ENCODE measurements at regions of chr2 and their contacts with region 1.

Region 1: DNA sequence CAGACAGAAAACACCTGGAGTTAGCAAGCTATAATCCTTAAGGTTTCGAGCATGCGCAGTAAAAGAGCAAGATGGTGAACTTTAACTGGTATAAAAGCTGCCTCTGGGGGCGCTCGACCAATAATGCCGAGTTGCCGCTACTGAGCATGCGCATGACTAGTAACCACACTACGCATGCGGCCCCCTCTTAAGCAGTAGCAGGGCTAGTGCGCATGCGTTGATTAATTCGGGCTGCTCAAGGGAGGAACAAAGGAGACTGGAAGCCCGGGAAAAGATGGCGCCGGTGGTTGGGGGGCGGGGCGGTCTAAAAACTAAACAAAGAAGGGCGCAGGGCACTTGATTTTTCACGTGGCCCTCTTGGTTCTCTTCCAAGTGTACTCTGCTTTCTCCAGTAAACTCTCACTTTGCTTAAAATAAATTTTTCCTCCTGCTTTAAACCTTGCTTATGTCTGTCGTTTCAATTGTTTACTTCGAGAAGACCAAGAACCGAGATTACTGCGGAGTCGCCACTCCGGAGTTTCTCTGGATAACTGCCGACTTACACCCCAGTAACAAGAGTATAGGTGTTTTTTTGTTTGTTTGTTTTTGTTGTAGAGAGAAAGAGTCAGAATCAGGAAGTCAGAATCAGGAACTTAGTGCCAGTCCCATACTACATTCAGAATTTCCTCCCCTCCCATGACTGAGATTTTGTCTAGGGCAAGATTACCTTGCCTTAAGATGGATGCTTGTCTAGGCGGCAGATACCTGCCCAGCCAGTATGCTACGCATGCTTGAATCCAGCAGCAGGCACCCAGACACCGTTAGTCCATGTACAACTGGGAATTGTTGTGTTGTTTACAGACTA is 5.8 kb downstream of the XRCC5 start:
- DNase-seq: peak; percentile 94 to 99 (median 97)
- ATAC-seq: peak; percentile 93
- H3K4me3 ChIP-seq: peak overlapping the region; percentile 65
- H3K4me3 Mint-ChIP-seq: peak overlapping the region; percentile 90
- H3K27ac ChIP-seq: peak overlapping the region; percentile 69 to 78
- H3K27ac Mint-ChIP-seq: peak overlapping the region; percentile 90
- H3K4me1 ChIP-seq: peaks cover 42% of the 10 kb centered on the region
- H3K4me1 Mint-ChIP-seq: peaks cover 95% of the 10 kb centered on the region
- H3K27me3 ChIP-seq: no peaks in the 10 kb centered on the region
- H3K27me3 Mint-ChIP-seq: no peaks in the 10 kb centered on the region
- CTCF ChIP-seq: peak; percentile 92

Region 2: DNA sequence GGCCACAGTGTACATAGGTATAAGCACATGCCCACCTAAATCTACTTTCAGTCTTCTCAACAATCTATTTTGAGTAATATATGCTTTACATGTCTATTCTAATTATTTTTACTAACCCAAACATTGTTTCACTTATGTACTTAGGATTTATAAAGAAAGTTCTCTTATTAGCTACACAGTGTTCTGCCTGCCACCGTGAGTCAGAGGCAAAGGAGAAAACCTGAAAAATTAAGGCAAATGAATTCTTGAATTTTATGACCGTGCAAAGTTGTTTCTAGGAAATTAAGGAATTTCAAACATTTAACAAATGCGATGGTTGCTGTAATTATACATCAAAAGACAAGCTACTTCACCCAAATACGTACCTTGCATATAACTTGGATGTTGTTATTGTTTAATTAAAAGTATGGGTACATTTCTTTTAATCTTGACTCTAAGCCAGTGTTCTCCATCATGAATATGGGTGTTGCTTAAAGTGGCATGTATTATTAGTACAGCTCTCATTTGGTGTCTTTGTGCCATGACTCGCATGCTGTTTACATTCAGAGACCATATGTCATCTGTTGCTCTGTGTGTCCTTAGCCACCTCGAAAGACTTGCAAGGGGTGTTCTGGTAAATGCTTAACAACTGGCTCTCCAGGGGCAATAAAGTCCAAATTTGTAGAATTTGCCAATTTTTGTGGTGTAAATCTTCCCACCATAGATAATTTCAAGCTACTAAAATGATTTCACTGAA is 524.8 kb before region 1 on chr2:
- CTCF ChIA-PET with region 1: no interaction called
- POLR2A ChIA-PET with region 1: no interaction called
- intact Hi-C with region 1: no loop called
- DNase-seq: no peak
- ATAC-seq: no peak
- H3K4me3 ChIP-seq: no peak overlapping the region
- H3K4me3 Mint-ChIP-seq: no peak overlapping the region
- H3K27ac ChIP-seq: no peak overlapping the region
- H3K27ac Mint-ChIP-seq: no peak overlapping the region
- H3K4me1 ChIP-seq: no peaks in the 10 kb centered on the region
- H3K4me1 Mint-ChIP-seq: no peaks in the 10 kb centered on the region
- H3K27me3 ChIP-seq: no peaks in the 10 kb centered on the region
- H3K27me3 Mint-ChIP-seq: no peaks in the 10 kb centered on the region
- CTCF ChIP-seq: no peak

Region 3: DNA sequence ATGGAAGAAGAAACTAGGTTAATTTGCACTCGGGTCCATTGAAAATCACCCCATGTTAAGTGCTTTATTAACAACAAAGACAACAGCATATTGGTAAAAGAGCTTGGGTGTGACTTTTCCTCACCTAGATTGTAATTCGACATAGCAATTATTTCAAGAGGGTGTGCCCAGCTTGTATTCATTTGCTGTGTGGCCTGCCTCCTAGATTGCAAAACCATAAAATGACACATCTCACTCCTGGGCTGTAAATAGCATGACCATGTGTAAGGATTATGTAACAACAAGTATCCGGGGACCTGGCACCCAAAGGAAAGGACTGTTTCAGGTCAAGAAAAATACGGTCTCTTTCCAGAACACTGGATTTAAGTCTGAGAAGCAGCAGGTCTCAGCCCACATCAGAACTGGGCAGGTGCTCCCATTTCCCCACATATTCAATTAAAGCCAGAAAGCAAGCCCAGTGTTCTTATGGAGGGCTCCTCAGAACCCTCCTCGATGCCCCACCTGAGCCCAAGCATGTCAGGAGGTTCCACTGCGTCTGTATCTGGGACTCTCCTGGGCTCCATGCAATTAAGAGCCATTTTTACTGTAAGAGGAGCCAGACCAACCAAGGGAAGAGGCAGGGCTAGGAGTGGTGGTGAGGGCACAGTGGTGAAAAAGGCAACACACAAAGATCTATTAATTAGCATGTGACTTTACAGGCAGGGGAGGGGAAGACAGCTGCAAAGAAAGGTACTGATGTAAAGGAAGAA is 140.8 kb before region 1 on chr2:
- CTCF ChIA-PET with region 1: no interaction called
- POLR2A ChIA-PET with region 1: no interaction called
- intact Hi-C with region 1: no loop called
- DNase-seq: peak in 1 of 14 experiments; percentile 22
- ATAC-seq: no peak
- H3K4me3 ChIP-seq: no peak overlapping the region
- H3K4me3 Mint-ChIP-seq: no peak overlapping the region
- H3K27ac ChIP-seq: no peak overlapping the region
- H3K27ac Mint-ChIP-seq: no peak overlapping the region
- H3K4me1 ChIP-seq: no peaks in the 10 kb centered on the region
- H3K4me1 Mint-ChIP-seq: no peaks in the 10 kb centered on the region
- H3K27me3 ChIP-seq: no peaks in the 10 kb centered on the region
- H3K27me3 Mint-ChIP-seq: no peaks in the 10 kb centered on the region
- CTCF ChIP-seq: no peak

Region 4: DNA sequence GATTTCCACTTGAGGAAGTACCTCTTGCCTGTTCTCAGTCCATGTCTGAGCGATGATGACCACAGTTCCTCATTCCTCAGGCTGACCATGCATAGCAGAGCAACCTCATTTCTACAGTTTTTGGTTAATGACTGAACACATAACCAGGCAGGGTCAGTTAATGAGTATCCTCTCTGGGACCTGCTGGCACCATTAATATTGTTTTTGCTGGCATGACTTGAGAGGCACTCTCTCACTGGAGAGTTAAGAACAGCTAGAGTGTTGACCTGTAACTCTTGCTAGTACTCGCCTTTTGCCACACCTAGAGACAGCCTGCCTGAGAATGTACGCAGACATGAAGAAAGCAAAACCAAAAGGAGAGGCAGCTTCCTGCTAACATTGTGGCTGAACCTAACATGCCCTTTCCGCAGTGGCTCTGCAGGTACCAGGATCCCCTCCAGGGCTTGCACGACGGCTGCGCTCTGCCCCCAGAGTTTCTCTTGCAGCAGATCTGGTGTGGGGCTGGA is 57.2 kb before region 1 on chr2:
- CTCF ChIA-PET with region 1: interaction called, 3 read pairs
- POLR2A ChIA-PET with region 1: interaction called, 31 read pairs
- intact Hi-C with region 1: loop called in 1 of 2 experiments (anchors 10 kb)
- DNase-seq: peak; percentile 40 to 84 (median 54)
- ATAC-seq: peak; percentile 96
- H3K4me3 ChIP-seq: peak overlapping the region; percentile 36
- H3K4me3 Mint-ChIP-seq: peak overlapping the region; percentile 76
- H3K27ac ChIP-seq: peak overlapping the region; percentile 70 to 86
- H3K27ac Mint-ChIP-seq: peak overlapping the region; percentile 99
- H3K4me1 ChIP-seq: peaks cover 11% of the 10 kb centered on the region
- H3K4me1 Mint-ChIP-seq: peaks cover 42% of the 10 kb centered on the region
- H3K27me3 ChIP-seq: no peaks in the 10 kb centered on the region
- H3K27me3 Mint-ChIP-seq: no peaks in the 10 kb centered on the region
- CTCF ChIP-seq: no peak

Region 5: DNA sequence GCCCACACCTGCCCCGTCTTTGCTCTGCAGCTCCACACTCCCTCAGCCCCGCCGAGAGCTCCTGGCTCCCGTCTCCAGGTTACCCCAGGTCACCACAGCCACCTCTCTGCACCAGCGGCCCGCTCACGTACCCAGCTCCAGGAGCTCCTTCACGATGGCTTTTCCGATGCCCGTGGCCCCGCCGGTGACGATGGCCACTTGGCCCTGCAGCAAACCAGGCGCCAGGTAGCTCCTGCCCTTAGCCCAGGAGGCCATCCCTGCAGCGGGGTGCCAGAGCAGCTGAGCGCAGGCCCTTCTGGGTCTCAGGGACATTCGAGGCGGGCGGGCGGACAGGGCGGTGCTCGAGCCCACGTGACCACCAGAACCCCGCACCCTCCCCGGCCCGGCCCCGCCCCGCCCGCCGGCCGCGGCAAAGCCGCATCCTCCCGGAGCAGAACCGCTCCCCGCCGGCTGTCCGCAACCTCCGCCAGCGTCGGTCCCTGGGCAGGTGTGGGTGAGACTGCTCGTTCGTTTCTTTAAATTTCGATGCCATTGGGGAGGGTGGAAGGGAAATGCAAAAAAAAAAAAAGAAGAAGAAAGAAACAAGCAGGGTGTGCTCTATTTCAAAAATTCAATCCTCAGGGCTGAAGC is 33.3 kb before region 1 on chr2 and contains the starts of genes PECR and TMEM169:
- CTCF ChIA-PET with region 1: interaction called, 5 read pairs
- POLR2A ChIA-PET with region 1: interaction called, 106 read pairs
- intact Hi-C with region 1: loop called in 1 of 2 experiments (anchors 2 kb)
- DNase-seq: peak; percentile 52 to 85 (median 70)
- ATAC-seq: peak; percentile 79
- H3K4me3 ChIP-seq: peak within 1 kb of the TSS; percentile 96
- H3K4me3 Mint-ChIP-seq: peak within 1 kb of the TSS; percentile 87
- H3K27ac ChIP-seq: peak within 1 kb of the TSS; percentile 69 to 79
- H3K27ac Mint-ChIP-seq: peak within 1 kb of the TSS; percentile 82
- H3K4me1 ChIP-seq: peaks cover 49% of the 10 kb centered on the region
- H3K4me1 Mint-ChIP-seq: peaks cover 66% of the 10 kb centered on the region
- H3K27me3 ChIP-seq: no peaks in the 10 kb centered on the region
- H3K27me3 Mint-ChIP-seq: no peaks in the 10 kb centered on the region
- CTCF ChIP-seq: no peak
- total RNA-seq, gene PECR: 9.1 to 10.3 TPM
- total RNA-seq, gene TMEM169: 0.27 to 0.53 TPM

Region 6: GRCh38 chr2:216498418-216499413 is 383.8 kb after region 1 on chr2 and contains the start of gene RPL37A:
- CTCF ChIA-PET with region 1: no interaction called
- POLR2A ChIA-PET with region 1: no interaction called
- intact Hi-C with region 1: loop called in 1 of 2 experiments (anchors 5 kb)
- DNase-seq: peak; percentile 79 to 96 (median 86)
- ATAC-seq: peak; percentile 92
- H3K4me3 ChIP-seq: peak within 1 kb of the TSS; percentile 72
- H3K4me3 Mint-ChIP-seq: peak within 1 kb of the TSS; percentile 97
- H3K27ac ChIP-seq: peak within 1 kb of the TSS; percentile 77 to 82
- H3K27ac Mint-ChIP-seq: peak within 1 kb of the TSS; percentile 94
- H3K4me1 ChIP-seq: peaks cover 27% of the 10 kb centered on the region
- H3K4me1 Mint-ChIP-seq: peaks cover 54% of the 10 kb centered on the region
- H3K27me3 ChIP-seq: no peaks in the 10 kb centered on the region
- H3K27me3 Mint-ChIP-seq: no peaks in the 10 kb centered on the region
- CTCF ChIP-seq: no peak
- total RNA-seq, gene RPL37A: 4,138 to 4,142 TPM

Region 7: DNA sequence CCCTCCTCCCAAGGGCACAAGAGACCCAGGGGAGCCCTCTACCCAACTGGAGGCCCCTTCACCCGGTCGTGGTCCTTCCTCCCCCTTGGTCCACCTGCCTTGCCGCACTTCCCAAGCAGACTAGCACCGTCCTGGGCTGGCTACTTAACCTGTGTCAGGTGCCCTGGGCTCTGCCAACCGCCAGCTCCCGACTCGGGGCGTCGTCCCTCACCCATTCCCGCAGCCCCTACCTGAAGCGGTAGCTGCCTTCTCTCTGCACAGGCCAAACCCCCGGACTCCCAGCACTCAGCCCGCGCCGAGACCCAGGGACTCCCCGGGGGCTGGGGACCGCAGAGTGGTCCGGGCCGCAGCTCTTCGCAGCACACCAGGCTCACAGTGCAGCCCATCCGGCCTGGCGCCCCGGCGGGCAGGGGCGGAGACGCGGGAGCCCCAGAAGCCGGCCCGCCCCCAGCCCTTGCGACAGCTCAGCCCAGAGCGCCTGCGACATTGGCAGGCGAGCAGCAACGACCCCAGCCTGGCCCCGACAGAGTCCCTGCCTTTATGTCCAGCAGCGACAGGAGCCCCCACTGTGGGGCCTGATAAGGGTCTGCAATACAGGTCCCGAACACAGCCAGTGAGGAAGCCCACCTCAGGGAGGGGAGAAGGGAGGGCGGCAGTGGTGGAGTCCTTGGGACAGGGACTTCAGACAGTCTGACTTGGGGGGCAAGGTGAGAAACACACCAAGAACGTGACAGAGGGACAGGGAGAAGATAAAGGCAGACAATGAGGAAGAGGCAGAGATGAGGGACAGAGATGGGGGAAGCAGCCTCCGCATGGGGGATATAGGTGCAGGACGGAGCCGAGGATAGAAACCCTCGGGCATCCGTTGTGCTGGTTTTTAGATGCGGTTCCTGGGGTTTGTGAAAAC is 1918.9 kb after region 1 on chr2:
- CTCF ChIA-PET with region 1: no interaction called
- POLR2A ChIA-PET with region 1: no interaction called
- intact Hi-C with region 1: no loop called
- DNase-seq: peak in 2 of 14 experiments; percentile 23 to 27
- ATAC-seq: no peak
- H3K4me3 ChIP-seq: peak overlapping the region; percentile 46
- H3K4me3 Mint-ChIP-seq: peak overlapping the region; percentile 76
- H3K27ac ChIP-seq: no peak overlapping the region
- H3K27ac Mint-ChIP-seq: peak overlapping the region; percentile 22
- H3K4me1 ChIP-seq: peaks cover 19% of the 10 kb centered on the region
- H3K4me1 Mint-ChIP-seq: peaks cover 11% of the 10 kb centered on the region
- H3K27me3 ChIP-seq: peaks cover 0 to 4% of the 10 kb centered on the region in 2 experiments
- H3K27me3 Mint-ChIP-seq: peaks cover 7% of the 10 kb centered on the region
- CTCF ChIP-seq: no peak

Measured in CD4-positive, alpha-beta T cell (primary cell).